ENCODE measurements at regions of chr17 and their contacts with region 1.

Region 1: DNA sequence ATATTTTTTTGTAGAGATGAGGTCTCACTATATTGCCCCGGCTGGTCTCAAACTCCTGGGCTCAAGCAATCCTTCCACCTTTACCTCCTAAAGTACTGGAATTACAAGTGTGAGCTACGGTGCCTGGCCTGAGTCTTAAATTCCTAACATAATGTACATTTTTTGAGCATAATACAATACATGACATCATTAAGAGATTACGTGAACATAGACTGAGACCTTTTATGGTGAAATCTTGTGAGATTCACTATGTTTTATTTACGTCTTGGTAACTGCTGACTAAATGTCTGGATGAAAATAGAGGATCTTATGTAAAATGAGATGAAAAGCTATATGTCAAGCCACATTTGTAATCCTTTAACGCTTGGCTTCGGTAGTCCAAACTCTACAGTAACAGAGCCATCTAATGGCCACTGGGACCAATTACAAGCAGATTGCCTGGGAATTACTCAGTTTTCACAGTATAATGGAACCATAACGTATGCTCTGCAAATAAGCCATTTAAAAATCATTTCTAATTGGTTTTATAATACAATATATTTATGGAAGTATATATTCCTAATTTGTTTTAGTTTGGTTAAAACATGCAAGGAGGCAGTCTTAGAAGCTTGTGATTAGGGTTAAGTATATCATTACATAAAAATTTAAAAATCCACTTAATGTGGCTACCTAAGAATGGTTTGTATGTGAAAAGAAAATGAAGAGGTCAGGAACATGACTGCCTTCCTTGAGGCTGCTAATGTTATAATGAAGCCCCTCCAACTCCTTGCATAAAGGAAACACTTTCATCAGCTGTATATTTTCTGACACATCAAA is 8.1 kb upstream of the EFCAB13 start:
- DNase-seq: peak; percentile 67
- H3K4me3 ChIP-seq: no peak overlapping the region
- H3K27ac ChIP-seq: no peak overlapping the region
- H3K4me1 ChIP-seq: no peaks in the 10 kb centered on the region
- H3K27me3 ChIP-seq: no peaks in the 10 kb centered on the region
- CTCF ChIP-seq: peak; percentile 73

Region 2: DNA sequence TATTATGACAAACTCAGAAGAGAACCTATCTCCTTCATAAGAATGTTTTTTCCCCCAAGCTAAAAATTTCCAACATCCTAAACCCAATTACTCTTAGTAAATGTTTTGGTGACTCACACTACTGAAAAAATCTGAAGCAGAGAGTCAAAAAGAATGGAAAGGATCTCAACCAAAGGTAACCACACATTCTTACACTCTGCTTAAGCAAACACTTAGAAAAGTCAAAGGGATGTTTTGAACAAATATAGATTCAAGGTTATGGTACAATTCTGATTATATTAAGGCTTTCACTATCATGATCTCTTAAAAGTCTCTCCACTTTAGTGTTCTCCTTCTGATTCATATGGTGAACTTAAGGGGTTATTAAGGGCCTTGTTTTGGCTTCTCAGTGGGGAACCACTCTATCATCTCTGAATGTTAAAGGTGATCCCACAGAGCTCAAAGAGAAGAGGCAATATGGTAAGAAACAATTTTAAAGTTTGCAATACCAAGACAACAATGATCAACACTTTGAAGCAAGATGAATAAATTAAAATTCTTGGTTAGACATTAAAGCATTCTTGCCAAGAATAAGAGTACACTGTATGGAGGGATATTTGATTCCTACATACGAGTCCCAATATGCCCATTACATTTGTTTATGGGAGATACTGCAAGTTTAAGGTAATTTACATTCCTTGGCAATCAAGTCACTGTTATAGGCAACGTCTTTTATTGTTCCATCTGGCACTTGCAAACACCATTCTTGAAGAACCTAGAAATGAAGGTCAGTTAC is 195.7 kb before region 1 on chr17:
- CTCF ChIA-PET with region 1: no interaction called
- POLR2A ChIA-PET with region 1: no interaction called
- intact Hi-C with region 1: no loop called
- DNase-seq: no peak
- H3K4me3 ChIP-seq: no peak overlapping the region
- H3K27ac ChIP-seq: no peak overlapping the region
- H3K4me1 ChIP-seq: no peaks in the 10 kb centered on the region
- H3K27me3 ChIP-seq: no peaks in the 10 kb centered on the region
- CTCF ChIP-seq: no peak

Region 3: DNA sequence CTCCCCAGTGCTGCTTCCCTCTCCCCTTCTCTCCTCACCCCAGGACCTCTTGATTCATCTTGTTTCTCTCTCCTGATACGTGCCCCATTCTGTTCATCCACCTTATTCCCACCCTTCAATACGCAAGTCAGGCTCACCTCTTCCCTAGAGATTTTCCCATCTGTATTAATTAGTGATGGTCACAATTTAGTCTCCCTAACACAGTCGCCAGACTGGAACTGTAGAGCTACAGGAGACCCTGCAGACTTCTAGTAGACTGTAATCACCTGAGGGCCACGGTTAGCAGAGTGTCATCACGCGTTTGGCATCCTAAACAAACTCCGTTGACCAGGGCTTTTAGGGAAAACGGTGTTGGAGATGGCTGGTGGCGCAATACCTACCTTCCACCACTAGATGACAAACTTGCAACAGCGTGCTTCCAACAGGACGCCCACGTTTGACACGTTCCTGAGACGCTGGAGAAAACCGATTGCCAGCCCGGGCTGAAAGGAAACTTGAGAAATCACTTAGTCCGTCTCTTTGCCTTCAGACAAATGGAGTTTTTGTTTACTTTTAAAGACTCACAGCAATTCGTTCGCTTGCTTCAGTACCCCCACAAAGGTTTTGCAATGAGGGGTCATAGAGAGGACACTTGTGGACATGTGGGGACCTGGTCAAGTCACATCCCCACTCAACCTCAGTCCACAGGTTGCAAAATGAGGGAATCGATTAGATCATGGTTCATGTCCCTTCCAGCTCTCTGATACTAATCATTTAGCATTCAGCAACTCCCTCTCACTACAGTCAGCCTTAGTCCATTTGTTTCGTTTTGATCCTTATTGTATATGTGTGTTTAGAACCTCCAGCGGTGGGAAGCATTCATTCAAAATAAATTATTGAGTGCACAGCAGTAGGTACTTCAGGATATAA is 85.9 kb before region 1 on chr17:
- CTCF ChIA-PET with region 1: no interaction called
- POLR2A ChIA-PET with region 1: no interaction called
- intact Hi-C with region 1: loop called (anchors 2 kb)
- DNase-seq: peak; percentile 83
- H3K4me3 ChIP-seq: peak overlapping the region; percentile 21
- H3K27ac ChIP-seq: no peak overlapping the region
- H3K4me1 ChIP-seq: peaks cover 8% of the 10 kb centered on the region
- H3K27me3 ChIP-seq: no peaks in the 10 kb centered on the region
- CTCF ChIP-seq: peak; percentile 73

Region 4: GRCh38 chr17:47687748-47688147 is 372.1 kb after region 1 on chr17:
- CTCF ChIA-PET with region 1: no interaction called
- POLR2A ChIA-PET with region 1: no interaction called
- intact Hi-C with region 1: no loop called
- DNase-seq: no peak
- H3K4me3 ChIP-seq: no peak overlapping the region
- H3K27ac ChIP-seq: no peak overlapping the region
- H3K4me1 ChIP-seq: no peaks in the 10 kb centered on the region
- H3K27me3 ChIP-seq: no peaks in the 10 kb centered on the region
- CTCF ChIP-seq: no peak

Measured in A673 (cell line).